Posterior vena cava (tissue), 2 donors: ENCODE measurements at regions of chr15 and their contacts with region 1.

Region 1: DNA sequence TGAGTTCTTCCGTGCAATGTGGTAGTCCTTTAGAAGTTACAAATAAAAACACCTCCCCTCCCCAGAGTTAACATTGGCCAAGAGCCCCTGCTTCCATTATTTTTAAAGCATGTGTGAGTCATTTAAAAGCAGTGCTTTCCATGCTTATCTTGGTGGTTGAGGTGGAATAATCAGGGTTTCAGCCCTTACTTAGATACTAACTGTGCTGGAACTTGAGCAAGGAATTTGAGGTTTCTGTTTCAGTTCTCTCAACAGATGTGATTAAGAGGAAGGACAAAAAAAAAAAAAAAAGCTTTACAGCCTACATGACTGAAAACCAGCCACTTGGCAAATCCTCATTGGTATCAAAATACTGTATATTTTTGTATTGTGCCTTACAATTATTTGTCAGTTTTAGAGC is 64.5 kb downstream of the CGNL1 start:
- DNase-seq: no peak

Region 2: DNA sequence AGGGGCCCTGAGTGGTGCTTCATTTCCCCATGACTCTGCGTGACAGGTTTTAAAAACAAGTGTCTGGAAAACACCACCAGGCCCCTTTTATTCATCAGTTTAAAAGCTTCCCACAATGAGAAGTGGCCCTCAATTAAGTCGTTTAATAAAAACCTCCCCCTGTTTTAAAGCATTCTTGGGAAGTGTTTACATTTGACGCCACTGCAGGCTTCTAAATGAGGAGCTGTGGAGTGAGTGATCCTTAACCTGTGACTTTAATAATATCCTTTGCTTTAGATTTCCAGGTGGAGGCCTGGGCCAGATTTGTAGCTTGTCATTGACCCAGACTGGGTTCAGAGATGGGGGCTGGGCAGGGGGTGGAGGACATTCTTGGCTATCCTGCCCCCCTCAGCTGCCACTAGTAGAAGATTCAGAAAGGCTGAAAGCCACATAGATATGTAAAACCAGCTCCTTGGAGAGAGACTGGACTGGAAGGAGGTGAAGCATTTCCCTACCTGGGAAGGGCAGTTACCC is 53.2 kb before region 1 on chr15:
- intact Hi-C with region 1: loop called in 1 of 2 experiments (anchors 2 kb)
- DNase-seq: no peak